HepG2 (cell line): ENCODE measurements at regions of chr12 and their contacts with region 1.

Region 1: DNA sequence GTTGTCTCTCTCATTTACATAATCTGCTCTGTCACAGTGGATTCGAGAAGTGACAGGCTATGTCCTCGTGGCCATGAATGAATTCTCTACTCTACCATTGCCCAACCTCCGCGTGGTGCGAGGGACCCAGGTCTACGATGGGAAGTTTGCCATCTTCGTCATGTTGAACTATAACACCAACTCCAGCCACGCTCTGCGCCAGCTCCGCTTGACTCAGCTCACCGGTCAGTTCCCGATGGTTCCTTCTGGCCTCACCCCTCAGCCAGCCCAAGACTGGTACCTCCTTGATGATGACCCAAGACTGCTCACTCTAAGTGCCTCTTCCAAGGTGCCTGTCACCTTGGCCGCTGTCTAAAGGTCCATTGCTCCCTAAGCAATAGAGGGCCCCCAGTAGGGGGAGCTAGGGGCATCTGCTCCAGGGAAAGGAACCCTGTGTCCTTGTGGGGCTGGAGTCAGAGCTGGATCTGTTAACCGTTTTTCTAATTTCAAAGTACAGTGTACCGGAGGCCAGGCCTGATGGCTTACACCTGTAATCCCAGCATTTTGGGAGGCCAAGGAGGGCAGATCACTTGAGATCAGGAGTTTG is 5.1 kb downstream of the ERBB3 start:
- DNase-seq: no peak
- ATAC-seq: no peak
- H3K4me3 ChIP-seq: no peak overlapping the region
- H3K27ac ChIP-seq: peak overlapping the region; percentile 8
- H3K4me1 ChIP-seq: peaks cover 47% of the 10 kb centered on the region
- H3K27me3 ChIP-seq: no peaks in the 10 kb centered on the region; a peak in 1 of 5 replicates
- CTCF ChIP-seq: peak; percentile 62
- EP300 ChIP-seq: no peak
- POLR2A ChIP-seq: no peak
- RAD21 ChIP-seq: 0 out of 2 replicates have a peak, but pooled peaks have one; percentile 16

Region 2: GRCh38 chr12:56104109-56104814 is 19.2 kb after region 1 on chr12 and contains the start of gene PA2G4:
- CTCF ChIA-PET with region 1: no interaction called
- POLR2A ChIA-PET with region 1: interaction called, 279 read pairs
- in situ Hi-C with region 1: no loop called
- intact Hi-C with region 1: no loop called
- DNase-seq: peak; percentile 97
- ATAC-seq: peak; percentile 94
- H3K4me3 ChIP-seq: peak within 1 kb of the TSS; percentile 50 to 85 (median 74)
- H3K27ac ChIP-seq: peak within 1 kb of the TSS; percentile 76
- H3K4me1 ChIP-seq: peaks cover 35% of the 10 kb centered on the region
- H3K27me3 ChIP-seq: no peaks in the 10 kb centered on the region
- CTCF ChIP-seq: 0 out of 2 replicates have a peak, but pooled peaks have one; percentile 10
- EP300 ChIP-seq: peak in 1 of 2 experiments; percentile 21; a peak in 2 of 4 replicates
- POLR2A ChIP-seq: peak; percentile 91
- RAD21 ChIP-seq: no peak
- total RNA-seq, gene PA2G4: 240 and 281 TPM in 2 replicates